ENCODE measurements at regions of chr6 and their contacts with region 1.

Region 1: DNA sequence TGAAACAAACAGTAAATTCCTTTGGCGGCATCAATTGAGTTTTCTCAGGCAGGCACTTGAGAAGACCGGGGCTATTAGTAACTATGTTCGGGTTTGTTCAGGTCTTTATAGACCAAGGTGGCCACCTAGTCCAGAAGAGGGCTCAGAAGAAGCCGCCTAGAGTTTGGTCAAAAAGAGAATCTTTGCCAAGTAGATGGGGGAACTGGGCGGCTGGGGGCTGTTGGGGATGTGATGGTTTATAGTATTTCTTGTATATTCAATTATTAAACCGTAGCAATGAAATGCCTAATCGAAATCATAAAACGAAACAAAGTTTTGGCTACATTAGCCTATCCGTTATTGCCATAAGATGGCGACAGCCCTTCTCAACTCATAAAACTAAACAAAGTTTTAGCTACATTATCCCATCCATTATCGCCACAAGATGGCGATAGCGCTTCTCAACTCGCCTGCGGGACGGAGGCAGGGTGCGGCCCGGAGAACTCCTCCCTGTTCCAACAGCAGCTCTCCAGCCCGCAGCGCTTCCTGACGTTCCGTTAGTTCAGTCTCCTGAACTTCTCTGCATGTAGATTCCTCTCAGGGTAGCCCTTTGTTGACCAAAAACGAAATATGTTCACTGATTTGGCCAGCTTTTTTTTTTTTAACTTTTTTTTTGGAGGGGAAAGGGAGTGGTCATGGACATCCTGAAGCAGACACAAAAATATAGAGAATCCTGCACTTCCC is 120.5 kb upstream of the PRSS16 start:
- H3K4me3 Mint-ChIP-seq: peak overlapping the region; percentile 82
- H3K27ac Mint-ChIP-seq: peak overlapping the region; percentile 90
- H3K4me1 Mint-ChIP-seq: peaks cover 10% of the 10 kb centered on the region
- H3K27me3 Mint-ChIP-seq: no peaks in the 10 kb centered on the region

Region 2: GRCh38 chr6:27146706-27147505 is 19.9 kb after region 1 on chr6:
- intact Hi-C with region 1: loop called (anchors 1 kb)
- H3K4me3 Mint-ChIP-seq: no peak overlapping the region
- H3K27ac Mint-ChIP-seq: no peak overlapping the region
- H3K4me1 Mint-ChIP-seq: peaks cover 5% of the 10 kb centered on the region
- H3K27me3 Mint-ChIP-seq: no peaks in the 10 kb centered on the region

Region 3: GRCh38 chr6:27157459-27158315 is 30.7 kb after region 1 on chr6:
- intact Hi-C with region 1: loop called (anchors 1 kb)
- H3K4me3 Mint-ChIP-seq: peak overlapping the region; percentile 69
- H3K27ac Mint-ChIP-seq: peak overlapping the region; percentile 58
- H3K4me1 Mint-ChIP-seq: peaks cover 19% of the 10 kb centered on the region
- H3K27me3 Mint-ChIP-seq: peaks cover 19% of the 10 kb centered on the region

Region 4: GRCh38 chr6:27237089-27237803 is 110.3 kb after region 1 on chr6:
- intact Hi-C with region 1: no loop called
- H3K4me3 Mint-ChIP-seq: no peak overlapping the region
- H3K27ac Mint-ChIP-seq: no peak overlapping the region
- H3K4me1 Mint-ChIP-seq: no peaks in the 10 kb centered on the region
- H3K27me3 Mint-ChIP-seq: peaks cover 71% of the 10 kb centered on the region

Measured in dendritic cell treated with granulocyte-macrophage colony-stimulating factor and Interleukin-4, amounts not matched to agents 40 ng/mL and 50 ng/mL, for 4 days (primary cell).